ENCODE measurements at regions of chr7 and their contacts with region 1.

Region 1: GRCh38 chr7:43664681-43665080 is 64.6 kb downstream of the COA1 start:
- DNase-seq: no peak
- ATAC-seq: no peak
- H3K4me3 ChIP-seq: no peak overlapping the region
- H3K27ac ChIP-seq: no peak overlapping the region
- H3K4me1 ChIP-seq: peaks cover 0 to 5% of the 10 kb centered on the region in 2 experiments; a peak in 1 of 5 replicates
- H3K27me3 ChIP-seq: no peaks in the 10 kb centered on the region
- CTCF ChIP-seq: no peak
- EP300 ChIP-seq: no peak
- POLR2A ChIP-seq: no peak
- RAD21 ChIP-seq: no peak

Region 2: DNA sequence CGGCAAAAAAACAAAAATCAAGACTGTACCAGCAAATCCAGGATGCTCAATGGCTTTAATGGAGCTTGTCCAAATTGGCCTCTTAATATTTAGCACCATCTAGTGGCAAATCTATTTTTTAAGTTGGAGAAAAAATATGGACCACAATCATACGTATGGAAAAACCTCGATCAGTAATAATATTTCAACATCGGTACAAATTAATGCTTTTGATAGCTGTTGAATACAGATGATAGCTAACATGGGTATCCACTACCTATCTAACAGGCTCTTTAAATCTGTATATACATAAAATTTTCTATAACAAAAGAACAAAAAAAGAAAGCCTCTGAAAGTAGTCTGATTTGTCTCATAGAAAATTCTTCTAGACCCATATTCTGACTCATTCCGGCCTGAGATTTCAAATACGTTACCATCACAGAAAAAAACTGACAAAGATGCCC is 35.4 kb after region 1 on chr7:
- CTCF ChIA-PET with region 1: no interaction called
- POLR2A ChIA-PET with region 1: no interaction called
- in situ Hi-C with region 1: no loop called
- intact Hi-C with region 1: loop called (anchors 5 kb)
- DNase-seq: peak in 2 of 4 experiments; percentile 28 to 37
- ATAC-seq: peak; percentile 79
- H3K4me3 ChIP-seq: no peak overlapping the region
- H3K27ac ChIP-seq: no peak overlapping the region
- H3K4me1 ChIP-seq: no peaks in the 10 kb centered on the region
- H3K27me3 ChIP-seq: no peaks in the 10 kb centered on the region
- CTCF ChIP-seq: peak; percentile 46 to 79 (median 50); a peak in 4 of 6 replicates
- EP300 ChIP-seq: no peak
- POLR2A ChIP-seq: no peak
- RAD21 ChIP-seq: peak; percentile 77 to 84

Region 3: DNA sequence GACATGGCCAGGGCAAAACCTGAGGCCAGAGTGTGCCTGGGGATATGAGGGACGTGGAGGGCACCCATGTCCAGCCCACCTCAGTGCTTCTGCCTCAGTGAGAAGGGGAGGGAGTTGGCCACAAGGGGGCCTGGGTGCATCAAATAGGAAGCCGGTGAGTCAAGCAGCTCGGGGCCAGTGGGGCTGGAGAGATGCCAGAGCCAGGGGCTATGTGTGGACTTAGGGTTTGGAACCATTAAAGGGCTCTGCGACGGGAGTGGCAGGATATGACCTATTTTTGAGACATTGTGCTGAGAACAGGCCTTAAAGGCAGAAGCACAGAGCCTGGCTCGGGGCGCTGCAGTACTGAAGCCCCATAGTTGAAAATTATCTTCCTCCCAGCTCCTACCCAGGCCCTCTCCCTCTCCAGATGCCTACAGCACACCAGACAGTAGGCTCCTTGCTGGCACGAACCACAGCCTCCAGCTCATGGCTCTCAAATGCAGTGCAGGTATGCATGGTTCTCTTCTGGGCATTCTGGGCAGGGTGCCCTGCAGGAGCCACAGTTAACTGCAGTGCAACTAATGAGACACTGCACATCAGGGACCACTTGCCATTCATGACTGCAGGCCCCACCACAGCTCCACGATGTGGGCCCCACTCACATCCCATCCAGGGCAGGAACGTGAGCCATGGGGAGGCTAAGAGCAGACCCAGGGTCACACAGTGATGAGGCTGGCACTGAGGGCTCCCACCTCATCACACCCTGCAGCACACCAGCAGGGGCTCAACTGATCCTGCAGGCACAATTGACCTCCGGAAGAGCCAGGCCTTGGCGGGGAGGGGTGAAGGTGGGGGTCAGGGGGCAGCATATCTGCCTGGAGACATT is 407.9 kb after region 1 on chr7:
- CTCF ChIA-PET with region 1: no interaction called
- POLR2A ChIA-PET with region 1: no interaction called
- in situ Hi-C with region 1: no loop called
- intact Hi-C with region 1: no loop called
- DNase-seq: peak; percentile 68 to 82 (median 76)
- ATAC-seq: peak; percentile 90
- H3K4me3 ChIP-seq: no peak overlapping the region
- H3K27ac ChIP-seq: no peak overlapping the region
- H3K4me1 ChIP-seq: peaks cover 6 to 16% of the 10 kb centered on the region in 2 experiments; a peak in 3 of 5 replicates
- H3K27me3 ChIP-seq: peaks cover 0 to 7% of the 10 kb centered on the region in 2 experiments; a peak in 2 of 5 replicates
- CTCF ChIP-seq: peak; percentile 77 to 87 (median 80)
- EP300 ChIP-seq: no peak
- POLR2A ChIP-seq: no peak
- RAD21 ChIP-seq: peak; percentile 51 to 73